ENCODE measurements at regions of chr17 and their contacts with region 1.

Region 1: GRCh38 chr17:81034779-81035388 is at the start of gene BAIAP2:
- DNase-seq: peak; percentile 89
- H3K4me3 Mint-ChIP-seq: peak within 1 kb of the TSS; percentile 83
- H3K27ac Mint-ChIP-seq: peak within 1 kb of the TSS; percentile 84
- H3K4me1 Mint-ChIP-seq: peaks cover 17% of the 10 kb centered on the region
- H3K27me3 Mint-ChIP-seq: peaks cover 34% of the 10 kb centered on the region
- total RNA-seq, gene BAIAP2: 4.3 and 5.8 TPM in 2 replicates

Region 2: DNA sequence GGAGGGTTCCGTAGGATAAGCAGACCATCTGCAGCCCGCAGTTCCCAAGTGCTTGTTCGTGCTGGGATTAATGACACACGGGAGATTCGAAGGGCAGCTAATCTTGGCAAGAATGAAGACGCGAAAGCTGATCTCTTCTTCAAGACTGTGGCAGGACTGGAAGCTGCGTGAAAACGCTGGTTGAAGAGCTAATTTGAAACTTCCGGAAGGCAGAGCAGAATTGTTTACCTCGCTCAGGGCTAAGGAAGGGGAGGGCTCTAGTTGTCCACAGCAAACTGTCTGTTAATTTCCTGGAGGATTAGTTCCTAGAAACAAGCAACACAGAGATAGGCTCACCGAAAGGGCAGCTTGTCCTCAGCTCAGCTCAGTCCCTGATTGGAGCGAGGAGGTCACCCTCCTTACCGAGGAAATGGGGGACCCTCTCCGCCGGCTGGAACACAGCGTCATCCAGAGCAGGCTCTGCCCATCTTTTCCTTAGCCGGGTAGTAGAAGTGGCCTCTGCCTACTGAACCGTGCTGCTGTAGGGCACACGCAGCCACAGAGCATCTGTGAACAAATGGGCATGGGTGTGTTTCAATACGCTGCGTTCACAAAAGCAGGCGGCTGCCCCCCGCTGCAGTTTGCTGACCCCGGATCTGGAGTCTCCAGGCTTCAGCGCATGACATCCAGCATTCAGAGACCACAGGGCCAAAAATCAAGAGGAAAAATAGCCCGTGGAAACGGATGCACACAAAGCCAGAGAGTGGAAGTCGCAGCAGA is 16.7 kb before region 1 on chr17:
- intact Hi-C with region 1: loop called (anchors 1 kb)
- DNase-seq: peak; percentile 30
- H3K4me3 Mint-ChIP-seq: peak overlapping the region; percentile 82
- H3K27ac Mint-ChIP-seq: peak overlapping the region; percentile 97
- H3K4me1 Mint-ChIP-seq: peaks cover 31% of the 10 kb centered on the region
- H3K27me3 Mint-ChIP-seq: no peaks in the 10 kb centered on the region

Region 3: DNA sequence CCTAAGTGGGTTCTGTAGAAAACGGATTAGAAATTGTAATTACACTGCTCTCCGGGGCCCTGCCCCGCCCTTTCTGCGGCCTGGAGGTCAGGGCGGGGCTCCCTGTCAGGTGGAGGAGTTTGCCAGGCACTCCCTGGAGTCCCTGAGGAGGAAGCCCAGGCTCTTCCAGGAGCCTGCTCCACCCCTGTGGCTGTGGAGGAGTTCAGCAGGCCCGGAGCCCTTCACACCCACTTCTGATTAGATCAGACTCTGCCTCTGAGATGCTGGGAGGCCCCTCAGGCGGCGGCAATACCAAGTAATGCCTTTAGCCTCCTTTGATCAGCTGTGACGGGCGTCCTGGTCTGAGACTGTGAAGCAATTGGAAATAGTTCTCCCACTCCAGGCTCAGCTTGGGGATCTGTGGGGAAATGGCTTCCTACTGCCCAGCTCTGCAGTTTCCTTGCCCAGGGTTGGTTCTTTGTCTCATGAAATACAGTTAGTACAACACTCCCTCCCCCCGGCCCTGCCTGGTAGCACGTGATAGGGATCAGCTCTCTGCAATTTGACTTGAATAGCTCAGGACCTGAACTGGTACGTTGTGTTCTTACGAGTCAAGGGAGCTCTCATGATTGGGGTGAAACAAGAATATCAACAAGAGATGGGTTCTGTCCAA is 22.3 kb after region 1 on chr17:
- intact Hi-C with region 1: no loop called
- DNase-seq: no peak
- H3K4me3 Mint-ChIP-seq: no peak overlapping the region
- H3K27ac Mint-ChIP-seq: peak overlapping the region; percentile 34
- H3K4me1 Mint-ChIP-seq: no peaks in the 10 kb centered on the region
- H3K27me3 Mint-ChIP-seq: peaks cover 6% of the 10 kb centered on the region

Region 4: GRCh38 chr17:81094509-81095382 is 59.9 kb after region 1 on chr17:
- intact Hi-C with region 1: loop called (anchors 1 kb)
- DNase-seq: peak; percentile 77
- H3K4me3 Mint-ChIP-seq: peak overlapping the region; percentile 5
- H3K27ac Mint-ChIP-seq: peak overlapping the region; percentile 74
- H3K4me1 Mint-ChIP-seq: peaks cover 19% of the 10 kb centered on the region
- H3K27me3 Mint-ChIP-seq: peaks cover 8% of the 10 kb centered on the region

Measured in activated T-helper 1 cell treated with anti-CD3 and anti-CD28 coated beads, Interleukin-12 subunit alpha, Interleukin-12 subunit beta, Interleukin-2, Interleukin-4 antibody, amounts not matched to agents 30 ng/mL and 10 ng/mL and 1 ng/mL, durations not matched to agents 14 hours and 24 hours and 36 hours (primary cell).